PC-9 (cell line): ENCODE measurements at regions of chr5 and their contacts with region 1.

Region 1: GRCh38 chr5:180784497-180785097 is 18.0 kb downstream of the MGAT1 start:
- DNase-seq: peak; percentile 43 to 72
- H3K4me3 ChIP-seq: no peak overlapping the region
- H3K27ac ChIP-seq: no peak overlapping the region
- H3K4me1 ChIP-seq: peaks cover 16% of the 10 kb centered on the region
- H3K27me3 ChIP-seq: no peaks in the 10 kb centered on the region
- CTCF ChIP-seq: peak; percentile 74

Region 2: GRCh38 chr5:180802325-180803180 is 18.0 kb after region 1 on chr5 and contains the start of gene MGAT1:
- CTCF ChIA-PET with region 1: interaction called, 4 read pairs
- POLR2A ChIA-PET with region 1: interaction called, 4 read pairs
- intact Hi-C with region 1: loop called (anchors 1 kb)
- DNase-seq: peak; percentile 60 to 77
- H3K4me3 ChIP-seq: peak within 1 kb of the TSS; percentile 95
- H3K27ac ChIP-seq: peak within 1 kb of the TSS; percentile 63
- H3K4me1 ChIP-seq: peaks cover 41% of the 10 kb centered on the region
- H3K27me3 ChIP-seq: no peaks in the 10 kb centered on the region
- CTCF ChIP-seq: no peak
- total RNA-seq, gene MGAT1: 96.6 and 103 TPM in 2 replicates

Region 3: DNA sequence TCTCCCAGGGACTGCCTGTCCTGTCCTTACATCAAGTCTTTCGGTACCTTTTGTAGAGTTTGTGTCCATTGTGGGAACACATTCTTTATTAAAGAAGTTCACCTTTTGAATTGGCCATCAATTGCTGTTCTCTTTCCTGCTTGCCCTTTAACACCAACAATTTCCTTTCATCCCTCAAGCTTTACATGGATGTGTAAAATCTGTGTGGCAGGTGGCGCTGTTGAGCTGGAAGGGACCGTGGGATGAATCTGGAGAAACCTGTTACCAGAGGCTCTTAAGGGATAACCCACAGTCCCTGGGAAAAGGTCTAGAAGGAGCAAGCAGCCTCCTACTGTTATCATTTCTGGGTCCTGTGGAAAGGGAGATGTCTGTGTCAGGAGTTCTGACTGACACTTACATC is 84.4 kb after region 1 on chr5:
- CTCF ChIA-PET with region 1: no interaction called
- POLR2A ChIA-PET with region 1: no interaction called
- intact Hi-C with region 1: loop called (anchors 1 kb)
- DNase-seq: peak; percentile 69 to 88
- H3K4me3 ChIP-seq: no peak overlapping the region
- H3K27ac ChIP-seq: no peak overlapping the region
- H3K4me1 ChIP-seq: no peaks in the 10 kb centered on the region
- H3K27me3 ChIP-seq: no peaks in the 10 kb centered on the region
- CTCF ChIP-seq: peak; percentile 91

Region 4: GRCh38 chr5:181159286-181159829 is 374.8 kb after region 1 on chr5:
- CTCF ChIA-PET with region 1: no interaction called
- POLR2A ChIA-PET with region 1: no interaction called
- intact Hi-C with region 1: loop called (anchors 1 kb)
- DNase-seq: peak; percentile 75 to 93
- H3K4me3 ChIP-seq: no peak overlapping the region
- H3K27ac ChIP-seq: peak overlapping the region; percentile 84
- H3K4me1 ChIP-seq: peaks cover 17% of the 10 kb centered on the region
- H3K27me3 ChIP-seq: no peaks in the 10 kb centered on the region
- CTCF ChIP-seq: peak; percentile 90

Region 5: GRCh38 chr5:181260387-181261319 is 476.1 kb after region 1 on chr5 and contains the start of gene TRIM52:
- CTCF ChIA-PET with region 1: no interaction called
- POLR2A ChIA-PET with region 1: interaction called, 28 read pairs
- intact Hi-C with region 1: no loop called
- DNase-seq: peak; percentile 83 to 91
- H3K4me3 ChIP-seq: peak within 1 kb of the TSS; percentile 96
- H3K27ac ChIP-seq: peak within 1 kb of the TSS; percentile 66
- H3K4me1 ChIP-seq: peaks cover 36% of the 10 kb centered on the region
- H3K27me3 ChIP-seq: no peaks in the 10 kb centered on the region
- CTCF ChIP-seq: no peak
- total RNA-seq, gene TRIM52: 15.2 and 15.7 TPM in 2 replicates